ENCODE measurements at regions of chr2 and their contacts with region 1.

Region 1: GRCh38 chr2:9663008-9663879 is 32.4 kb upstream of the YWHAQ start:
- DNase-seq: no peak
- H3K4me3 ChIP-seq: no peak overlapping the region
- H3K27ac ChIP-seq: no peak overlapping the region
- H3K4me1 ChIP-seq: peaks cover 8% of the 10 kb centered on the region
- H3K27me3 ChIP-seq: no peaks in the 10 kb centered on the region
- CTCF ChIP-seq: no peak

Region 2: GRCh38 chr2:9693211-9693520 is 29.9 kb after region 1 on chr2:
- CTCF ChIA-PET with region 1: no interaction called
- dilution Hi-C with region 1: no loop called
- in situ Hi-C with region 1: no loop called
- intact Hi-C with region 1: no loop called
- DNase-seq: peak; percentile 47
- H3K4me3 ChIP-seq: no peak overlapping the region
- H3K27ac ChIP-seq: no peak overlapping the region
- H3K4me1 ChIP-seq: peaks cover 13% of the 10 kb centered on the region
- H3K27me3 ChIP-seq: no peaks in the 10 kb centered on the region
- CTCF ChIP-seq: no peak

Region 3: GRCh38 chr2:9712263-9712662 is 49.0 kb after region 1 on chr2:
- CTCF ChIA-PET with region 1: no interaction called
- dilution Hi-C with region 1: loop called (anchors 5 kb)
- in situ Hi-C with region 1: no loop called
- intact Hi-C with region 1: no loop called
- DNase-seq: no peak
- H3K4me3 ChIP-seq: no peak overlapping the region
- H3K27ac ChIP-seq: no peak overlapping the region
- H3K4me1 ChIP-seq: peaks cover 6% of the 10 kb centered on the region
- H3K27me3 ChIP-seq: no peaks in the 10 kb centered on the region
- CTCF ChIP-seq: no peak